ENCODE measurements at regions of chr10 and their contacts with region 1.

Region 1: GRCh38 chr10:112852306-112852705 is 97.7 kb upstream of the TCF7L2 start:
- DNase-seq: peak; percentile 89 to 96 (median 92)
- H3K4me3 ChIP-seq: peak overlapping the region in 1 of 3 experiments; percentile 43
- H3K4me3 Mint-ChIP-seq: peak overlapping the region; percentile 13 to 84
- H3K27ac ChIP-seq: peak overlapping the region in 1 of 2 donors; percentile 59
- H3K27ac Mint-ChIP-seq: peak overlapping the region; percentile 90 to 99 (median 94)
- H3K4me1 ChIP-seq: peaks cover 48 to 63% of the 10 kb centered on the region in 2 donors
- H3K4me1 Mint-ChIP-seq: peaks cover 61% of the 10 kb centered on the region
- H3K27me3 ChIP-seq: peaks cover 5 to 15% of the 10 kb centered on the region in 2 donors
- H3K27me3 Mint-ChIP-seq: peaks cover 13 to 38% (median 31%) of the 10 kb centered on the region in 3 donors
- CTCF ChIP-seq: no peak

Region 2: GRCh38 chr10:112811740-112812551 is 40.4 kb before region 1 on chr10:
- intact Hi-C with region 1: loop called in 1 of 2 experiments (anchors 1 kb)
- DNase-seq: peak in 1 of 3 donors; percentile 5
- H3K4me3 ChIP-seq: no peak overlapping the region
- H3K4me3 Mint-ChIP-seq: no peak overlapping the region
- H3K27ac ChIP-seq: no peak overlapping the region
- H3K27ac Mint-ChIP-seq: peak overlapping the region in 6 of 7 donors; percentile 25 to 84 (median 44)
- H3K4me1 ChIP-seq: peaks cover 42 to 46% of the 10 kb centered on the region in 2 donors
- H3K4me1 Mint-ChIP-seq: peaks cover 53% of the 10 kb centered on the region
- H3K27me3 ChIP-seq: no peaks in the 10 kb centered on the region
- H3K27me3 Mint-ChIP-seq: peaks cover 0 to 3% (median 1%) of the 10 kb centered on the region in 3 donors
- CTCF ChIP-seq: no peak

Region 3: GRCh38 chr10:113093188-113094113 is 241.1 kb after region 1 on chr10:
- intact Hi-C with region 1: loop called in 1 of 2 experiments (anchors 10 kb)
- DNase-seq: peak in 2 of 3 donors; percentile 35 to 59
- H3K4me3 ChIP-seq: peak overlapping the region in 1 of 3 experiments; percentile 35
- H3K4me3 Mint-ChIP-seq: peak overlapping the region in 1 of 2 donors; percentile 70
- H3K27ac ChIP-seq: peak overlapping the region in 1 of 2 donors; percentile 67
- H3K27ac Mint-ChIP-seq: peak overlapping the region; percentile 84 to 97 (median 89)
- H3K4me1 ChIP-seq: peaks cover 35 to 48% of the 10 kb centered on the region in 2 donors
- H3K4me1 Mint-ChIP-seq: peaks cover 54% of the 10 kb centered on the region
- H3K27me3 ChIP-seq: peaks cover 11 to 57% of the 10 kb centered on the region in 2 donors
- H3K27me3 Mint-ChIP-seq: peaks cover 42 to 87% (median 68%) of the 10 kb centered on the region in 3 donors
- CTCF ChIP-seq: no peak

Measured in CD14-positive monocyte (primary cell).